Heart left ventricle (tissue), 16 donors: ENCODE measurements at regions of chr19 and their contacts with region 1.

Region 1: DNA sequence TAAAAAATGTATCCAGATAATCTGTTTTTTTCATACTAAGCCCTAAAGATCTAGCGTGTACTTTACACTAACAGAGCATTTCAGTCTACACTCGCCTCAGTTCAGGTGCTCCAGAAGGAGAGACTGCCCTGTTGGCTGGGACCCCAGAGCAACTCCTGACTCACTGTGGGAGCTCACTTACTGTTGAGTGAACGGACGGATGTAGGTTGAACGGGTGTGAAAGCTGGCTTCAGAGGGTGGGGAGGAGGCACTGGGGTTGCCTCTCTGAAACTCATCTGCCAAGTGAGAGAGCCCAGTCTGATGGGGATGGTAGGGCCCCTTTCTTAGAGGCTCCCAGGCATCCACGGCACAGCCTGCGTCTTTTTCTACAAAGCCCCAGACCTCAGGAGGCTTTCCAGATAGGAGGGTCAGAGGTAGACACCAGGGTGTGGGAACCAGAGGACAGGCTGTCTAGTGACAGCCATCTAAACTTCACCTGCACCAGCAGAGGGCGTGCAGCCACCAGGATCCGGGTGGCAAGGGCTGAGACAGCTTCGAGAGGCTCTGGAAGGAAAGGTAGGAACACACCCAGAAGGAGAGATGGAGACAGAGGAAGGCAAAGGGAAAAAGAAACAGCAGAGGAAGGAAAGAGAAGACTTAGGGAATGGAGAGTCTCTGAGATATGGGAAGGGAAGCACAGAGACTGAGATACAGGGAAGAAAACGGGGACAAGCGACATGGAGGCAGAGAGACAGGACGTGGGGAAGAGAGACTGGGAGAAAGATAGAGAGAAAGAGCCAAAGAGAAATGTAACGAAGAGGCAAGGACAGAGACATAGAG is 3.7 kb downstream of the KASH5 start:
- DNase-seq: peak; percentile 66 to 89 (median 81)
- ATAC-seq: peak; percentile 66 to 89 (median 86)
- H3K4me3 ChIP-seq: no peak overlapping the region
- H3K27ac ChIP-seq: no peak overlapping the region
- H3K4me1 ChIP-seq: peaks cover 0 to 6% (median 0%) of the 10 kb centered on the region in 12 donors
- H3K27me3 ChIP-seq: peaks cover 0 to 36% (median 0%) of the 10 kb centered on the region in 9 donors
- CTCF ChIP-seq: peak; percentile 70 to 88 (median 78)
- POLR2A ChIP-seq: no peak

Region 2: DNA sequence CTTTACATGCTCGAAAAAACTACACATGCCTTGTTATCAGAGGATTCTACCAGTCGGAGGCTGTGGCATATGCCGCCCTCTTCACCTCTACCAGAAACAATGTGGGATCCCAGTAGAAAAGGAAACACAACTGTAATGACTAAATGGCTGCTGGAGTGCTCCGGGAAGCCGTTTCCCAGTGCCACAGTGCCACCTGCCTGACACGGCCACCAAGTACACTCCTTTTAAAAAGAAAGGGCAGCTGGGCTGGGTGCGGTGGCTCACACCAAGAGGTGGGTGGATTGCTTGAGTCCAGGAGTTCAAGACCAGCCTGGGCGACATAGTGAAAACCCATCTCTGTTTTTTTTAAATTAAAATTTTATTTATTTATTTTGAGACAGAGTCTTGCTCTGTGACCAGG is 166.9 kb before region 1 on chr19:
- intact Hi-C with region 1: loop called in 1 of 10 experiments (anchors 10 kb)
- DNase-seq: peak in 4 of 5 donors; percentile 34 to 70 (median 46)
- ATAC-seq: peak; percentile 29 to 86 (median 77)
- H3K4me3 ChIP-seq: no peak overlapping the region
- H3K27ac ChIP-seq: no peak overlapping the region
- H3K4me1 ChIP-seq: peaks cover 0 to 6% (median 0%) of the 10 kb centered on the region in 12 donors
- H3K27me3 ChIP-seq: no peaks in the 10 kb centered on the region
- CTCF ChIP-seq: peak in 11 of 12 donors; percentile 22 to 53 (median 45)
- POLR2A ChIP-seq: no peak

Region 3: GRCh38 chr19:49430678-49431329 is 39.0 kb after region 1 on chr19:
- intact Hi-C with region 1: loop called in 1 of 10 experiments (anchors 5 kb)
- DNase-seq: no peak
- ATAC-seq: no peak
- H3K4me3 ChIP-seq: no peak overlapping the region
- H3K27ac ChIP-seq: no peak overlapping the region
- H3K4me1 ChIP-seq: peaks cover 0 to 24% (median 6%) of the 10 kb centered on the region in 12 donors
- H3K27me3 ChIP-seq: peaks cover 58 to 98% (median 87%) of the 10 kb centered on the region in 9 donors
- CTCF ChIP-seq: peak in 1 of 12 donors; percentile 10
- POLR2A ChIP-seq: no peak

Region 4: DNA sequence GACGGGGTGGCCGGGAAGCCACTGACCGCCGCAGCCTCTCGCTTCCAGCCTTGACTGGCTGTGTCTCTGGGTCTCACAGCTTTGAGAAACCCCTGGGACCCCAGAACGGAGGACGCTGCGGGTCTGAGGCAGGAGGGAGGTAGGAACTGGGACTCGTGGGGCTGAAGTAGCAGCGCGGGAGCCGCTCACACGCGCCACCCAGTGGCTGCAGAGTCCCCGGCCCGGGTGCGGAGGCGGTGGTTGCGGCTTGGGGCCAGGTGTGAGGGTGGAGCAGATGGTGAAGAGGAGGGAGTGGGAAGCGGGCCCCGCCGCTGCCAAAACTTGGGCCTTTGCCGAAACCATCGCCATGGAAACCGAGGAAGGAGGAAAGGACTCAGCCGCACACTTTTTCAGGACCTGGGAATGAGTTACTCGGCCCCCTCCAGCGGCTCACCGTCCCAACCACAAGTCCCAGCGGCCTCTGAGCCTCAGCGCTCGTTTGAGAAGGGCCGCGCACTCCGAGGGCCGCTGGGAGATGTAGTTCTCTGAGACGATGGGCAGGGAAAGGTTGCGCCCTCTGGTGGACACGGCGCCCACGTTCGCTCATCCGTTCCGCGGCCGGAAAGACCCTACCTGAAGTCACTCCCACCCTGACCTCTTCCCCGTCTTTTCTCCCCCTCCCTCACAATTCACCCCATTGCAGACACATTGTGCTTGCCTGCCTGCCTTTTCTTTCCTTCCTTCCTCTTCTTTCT is 51.7 kb after region 1 on chr19:
- intact Hi-C with region 1: loop called (anchors 1 to 5 kb)
- DNase-seq: peak; percentile 95 to 98 (median 95)
- ATAC-seq: peak; percentile 89 to 94 (median 90)
- H3K4me3 ChIP-seq: peak overlapping the region; percentile 55 to 79 (median 69)
- H3K27ac ChIP-seq: peak overlapping the region; percentile 54 to 95 (median 88)
- H3K4me1 ChIP-seq: peaks cover 0 to 20% (median 2%) of the 10 kb centered on the region in 12 donors
- H3K27me3 ChIP-seq: peaks cover 0 to 38% (median 26%) of the 10 kb centered on the region in 9 donors
- CTCF ChIP-seq: peak; percentile 72 to 93 (median 80)
- POLR2A ChIP-seq: no peak

Region 5: DNA sequence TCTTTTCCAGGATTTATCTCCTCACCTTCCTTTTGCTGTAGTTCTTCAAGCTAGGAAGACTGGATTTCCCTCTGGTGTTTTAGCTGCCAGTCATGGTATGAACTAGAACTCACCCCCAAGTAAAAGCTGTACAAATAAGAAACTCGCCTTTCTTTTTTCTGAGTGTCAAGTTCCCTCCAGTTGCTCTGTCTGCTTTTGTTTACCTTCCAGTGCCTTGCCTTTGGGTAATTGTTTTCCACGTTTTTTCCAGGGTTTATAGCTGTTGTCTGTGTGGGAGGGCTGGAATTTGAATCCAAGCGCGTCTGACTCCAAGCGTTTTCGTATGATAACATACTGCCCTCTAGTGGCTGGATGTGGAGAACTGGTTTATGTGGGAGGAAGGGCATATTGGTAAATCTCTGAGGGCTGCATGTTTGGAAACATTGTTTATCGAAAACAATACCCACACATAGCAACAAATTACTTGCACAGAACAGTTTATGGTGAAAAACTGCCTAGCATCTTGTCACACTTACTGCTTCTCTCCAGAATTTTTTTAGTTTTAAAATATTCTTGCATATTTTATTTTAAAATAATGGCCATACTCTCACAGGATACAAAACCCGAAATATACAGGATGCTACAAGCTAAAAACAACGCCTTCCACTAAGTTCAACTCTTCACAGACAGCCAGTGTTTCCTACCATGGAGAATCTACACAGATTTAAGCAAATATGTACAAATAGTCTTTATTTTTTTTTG is 155.2 kb after region 1 on chr19:
- intact Hi-C with region 1: loop called in 5 of 10 experiments (anchors 1 to 10 kb)
- DNase-seq: peak in 4 of 5 donors; percentile 59 to 79 (median 70)
- ATAC-seq: peak; percentile 74 to 89 (median 80)
- H3K4me3 ChIP-seq: no peak overlapping the region
- H3K27ac ChIP-seq: peak overlapping the region in 1 of 12 donors; percentile 37
- H3K4me1 ChIP-seq: peaks cover 0 to 19% (median 0%) of the 10 kb centered on the region in 12 donors
- H3K27me3 ChIP-seq: no peaks in the 10 kb centered on the region
- CTCF ChIP-seq: peak; percentile 72 to 89 (median 85)
- POLR2A ChIP-seq: no peak

Region 6: GRCh38 chr19:49570138-49570856 is 178.5 kb after region 1 on chr19:
- intact Hi-C with region 1: loop called in 1 of 10 experiments (anchors 5 kb)
- DNase-seq: peak in 3 of 5 donors; percentile 42 to 59 (median 51)
- ATAC-seq: peak; percentile 75 to 81 (median 76)
- H3K4me3 ChIP-seq: peak overlapping the region in 1 of 12 donors; percentile 9
- H3K27ac ChIP-seq: peak overlapping the region; percentile 36 to 84 (median 68)
- H3K4me1 ChIP-seq: peaks cover 4 to 52% (median 20%) of the 10 kb centered on the region in 12 donors
- H3K27me3 ChIP-seq: no peaks in the 10 kb centered on the region
- CTCF ChIP-seq: peak; percentile 97 to 100 (median 98)
- POLR2A ChIP-seq: no peak